CD4-positive, alpha-beta memory T cell (primary cell): ENCODE measurements at regions of chr6 and their contacts with region 1.

Region 1: GRCh38 chr6:135094403-135094848 is 39.8 kb upstream of the HBS1L start:
- DNase-seq: peak; percentile 32 to 73 (median 45)
- H3K4me3 ChIP-seq: no peak overlapping the region
- H3K4me3 Mint-ChIP-seq: peak overlapping the region in 7 of 8 donors; percentile 14 to 64 (median 50)
- H3K27ac ChIP-seq: peak overlapping the region; percentile 19
- H3K27ac Mint-ChIP-seq: peak overlapping the region; percentile 64 to 89 (median 86)
- H3K4me1 ChIP-seq: peaks cover 35% of the 10 kb centered on the region
- H3K4me1 Mint-ChIP-seq: peaks cover 17 to 33% (median 27%) of the 10 kb centered on the region in 4 donors
- H3K27me3 ChIP-seq: no peaks in the 10 kb centered on the region
- H3K27me3 Mint-ChIP-seq: no peaks in the 10 kb centered on the region

Region 2: GRCh38 chr6:135014353-135014832 is 80.0 kb before region 1 on chr6:
- CTCF ChIA-PET with region 1: no interaction called
- POLR2A ChIA-PET with region 1: no interaction called
- intact Hi-C with region 1: loop called (anchors 5 kb)
- DNase-seq: peak; percentile 38 to 50 (median 39)
- H3K4me3 ChIP-seq: peak overlapping the region in 1 of 2 donors; percentile 32
- H3K4me3 Mint-ChIP-seq: peak overlapping the region; percentile 17 to 78 (median 69)
- H3K27ac ChIP-seq: peak overlapping the region; percentile 22
- H3K27ac Mint-ChIP-seq: peak overlapping the region; percentile 19 to 92 (median 90)
- H3K4me1 ChIP-seq: peaks cover 42% of the 10 kb centered on the region
- H3K4me1 Mint-ChIP-seq: peaks cover 37 to 60% (median 47%) of the 10 kb centered on the region in 4 donors
- H3K27me3 ChIP-seq: no peaks in the 10 kb centered on the region
- H3K27me3 Mint-ChIP-seq: no peaks in the 10 kb centered on the region

Region 3: GRCh38 chr6:135054569-135055498 is 39.6 kb before region 1 on chr6 and contains the start of gene HBS1L:
- CTCF ChIA-PET with region 1: interaction called, 40 read pairs
- POLR2A ChIA-PET with region 1: interaction called, 19 read pairs
- intact Hi-C with region 1: loop called (anchors 1 kb)
- DNase-seq: peak; percentile 95 to 97 (median 96)
- H3K4me3 ChIP-seq: peak within 1 kb of the TSS; percentile 54 to 91
- H3K4me3 Mint-ChIP-seq: peak within 1 kb of the TSS; percentile 93 to 99 (median 97)
- H3K27ac ChIP-seq: peak within 1 kb of the TSS; percentile 91
- H3K27ac Mint-ChIP-seq: peak within 1 kb of the TSS; percentile 96 to 99 (median 99)
- H3K4me1 ChIP-seq: peaks cover 37% of the 10 kb centered on the region
- H3K4me1 Mint-ChIP-seq: peaks cover 27 to 44% (median 37%) of the 10 kb centered on the region in 4 donors
- H3K27me3 ChIP-seq: no peaks in the 10 kb centered on the region
- H3K27me3 Mint-ChIP-seq: no peaks in the 10 kb centered on the region
- total RNA-seq, gene HBS1L: 63.8 to 69.9 TPM

Region 4: GRCh38 chr6:135105710-135106109 is 11.3 kb after region 1 on chr6:
- CTCF ChIA-PET with region 1: interaction called, 8 read pairs
- POLR2A ChIA-PET with region 1: interaction called, 46 read pairs
- intact Hi-C with region 1: loop called (anchors 1 kb)
- DNase-seq: no peak
- H3K4me3 ChIP-seq: no peak overlapping the region
- H3K4me3 Mint-ChIP-seq: no peak overlapping the region
- H3K27ac ChIP-seq: no peak overlapping the region
- H3K27ac Mint-ChIP-seq: no peak overlapping the region
- H3K4me1 ChIP-seq: peaks cover 36% of the 10 kb centered on the region
- H3K4me1 Mint-ChIP-seq: peaks cover 24 to 42% (median 29%) of the 10 kb centered on the region in 4 donors
- H3K27me3 ChIP-seq: no peaks in the 10 kb centered on the region
- H3K27me3 Mint-ChIP-seq: no peaks in the 10 kb centered on the region

Region 5: GRCh38 chr6:135114355-135115145 is 20.1 kb after region 1 on chr6:
- CTCF ChIA-PET with region 1: interaction called, 3 read pairs
- POLR2A ChIA-PET with region 1: interaction called, 14 read pairs
- intact Hi-C with region 1: no loop called
- DNase-seq: no peak
- H3K4me3 ChIP-seq: no peak overlapping the region
- H3K4me3 Mint-ChIP-seq: peak overlapping the region in 5 of 8 donors; percentile 10 to 43 (median 24)
- H3K27ac ChIP-seq: no peak overlapping the region
- H3K27ac Mint-ChIP-seq: peak overlapping the region in 3 of 7 donors; percentile 6 to 38 (median 18)
- H3K4me1 ChIP-seq: peaks cover 34% of the 10 kb centered on the region
- H3K4me1 Mint-ChIP-seq: peaks cover 28 to 55% (median 36%) of the 10 kb centered on the region in 4 donors
- H3K27me3 ChIP-seq: no peaks in the 10 kb centered on the region
- H3K27me3 Mint-ChIP-seq: peaks cover 0 to 17% of the 10 kb centered on the region in 2 donors

Region 6: GRCh38 chr6:135128268-135128914 is 34.0 kb after region 1 on chr6:
- CTCF ChIA-PET with region 1: interaction called, 5 read pairs
- POLR2A ChIA-PET with region 1: interaction called, 11 read pairs
- intact Hi-C with region 1: loop called (anchors 5 kb)
- DNase-seq: peak; percentile 61 to 73 (median 70)
- H3K4me3 ChIP-seq: no peak overlapping the region
- H3K4me3 Mint-ChIP-seq: peak overlapping the region; percentile 21 to 91 (median 82)
- H3K27ac ChIP-seq: peak overlapping the region; percentile 25
- H3K27ac Mint-ChIP-seq: peak overlapping the region; percentile 90 to 98 (median 95)
- H3K4me1 ChIP-seq: peaks cover 23% of the 10 kb centered on the region
- H3K4me1 Mint-ChIP-seq: peaks cover 15 to 34% (median 30%) of the 10 kb centered on the region in 4 donors
- H3K27me3 ChIP-seq: no peaks in the 10 kb centered on the region
- H3K27me3 Mint-ChIP-seq: no peaks in the 10 kb centered on the region

Region 7: GRCh38 chr6:135233686-135234489 is 139.5 kb after region 1 on chr6:
- CTCF ChIA-PET with region 1: no interaction called
- POLR2A ChIA-PET with region 1: no interaction called
- intact Hi-C with region 1: no loop called
- DNase-seq: no peak
- H3K4me3 ChIP-seq: no peak overlapping the region
- H3K4me3 Mint-ChIP-seq: no peak overlapping the region
- H3K27ac ChIP-seq: no peak overlapping the region
- H3K27ac Mint-ChIP-seq: no peak overlapping the region
- H3K4me1 ChIP-seq: peaks cover 16% of the 10 kb centered on the region
- H3K4me1 Mint-ChIP-seq: peaks cover 0 to 9% (median 6%) of the 10 kb centered on the region in 4 donors
- H3K27me3 ChIP-seq: no peaks in the 10 kb centered on the region
- H3K27me3 Mint-ChIP-seq: no peaks in the 10 kb centered on the region